IMR-90 (cell line): ENCODE measurements at regions of chr14 and their contacts with region 1.

Region 1: GRCh38 chr14:58059126-58059525 is 92.9 kb downstream of the ARMH4 start:
- DNase-seq: no peak
- ATAC-seq: no peak
- H3K4me3 ChIP-seq: no peak overlapping the region
- H3K27ac ChIP-seq: no peak overlapping the region
- H3K4me1 ChIP-seq: no peaks in the 10 kb centered on the region
- H3K27me3 ChIP-seq: peaks cover 3% of the 10 kb centered on the region
- CTCF ChIP-seq: no peak
- POLR2A ChIP-seq: no peak
- RAD21 ChIP-seq: no peak

Region 2: DNA sequence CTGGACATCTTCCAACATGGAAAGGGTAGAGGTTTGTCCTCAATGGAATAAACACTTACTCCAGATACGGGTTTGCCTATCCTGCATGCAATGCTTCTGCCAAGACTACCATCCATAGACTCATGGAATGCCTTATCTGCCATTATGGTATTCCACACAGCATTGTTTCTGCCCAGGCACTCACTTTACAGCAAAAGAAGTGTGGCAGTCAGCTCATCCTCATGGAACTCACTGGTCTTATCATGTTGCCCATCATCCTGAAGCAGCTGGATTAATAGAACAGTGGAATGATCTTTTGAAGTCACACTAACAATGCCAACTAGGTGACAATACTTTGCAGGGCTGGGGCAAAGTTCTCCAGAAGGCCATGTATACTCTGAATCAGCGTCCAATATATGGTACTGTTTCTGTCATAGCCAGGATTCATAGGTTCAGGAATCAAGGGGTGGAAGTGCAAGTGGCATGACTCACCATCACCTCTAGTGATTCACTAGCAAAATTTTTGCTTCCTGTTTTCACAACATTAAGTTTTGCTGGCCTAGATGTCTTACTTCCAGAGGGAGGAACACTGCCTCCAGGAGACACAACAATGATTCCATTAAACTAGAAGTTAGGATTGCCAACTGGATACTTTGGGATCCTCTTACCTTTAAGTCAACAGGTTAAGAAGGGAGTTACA is 333.6 kb before region 1 on chr14:
- CTCF ChIA-PET with region 1: no interaction called
- POLR2A ChIA-PET with region 1: no interaction called
- dilution Hi-C with region 1: no loop called
- in situ Hi-C with region 1: no loop called
- intact Hi-C with region 1: loop called (anchors 10 kb)
- DNase-seq: no peak
- ATAC-seq: no peak
- H3K4me3 ChIP-seq: no peak overlapping the region
- H3K27ac ChIP-seq: no peak overlapping the region
- H3K4me1 ChIP-seq: no peaks in the 10 kb centered on the region
- H3K27me3 ChIP-seq: no peaks in the 10 kb centered on the region
- CTCF ChIP-seq: no peak
- POLR2A ChIP-seq: no peak
- RAD21 ChIP-seq: no peak

Region 3: DNA sequence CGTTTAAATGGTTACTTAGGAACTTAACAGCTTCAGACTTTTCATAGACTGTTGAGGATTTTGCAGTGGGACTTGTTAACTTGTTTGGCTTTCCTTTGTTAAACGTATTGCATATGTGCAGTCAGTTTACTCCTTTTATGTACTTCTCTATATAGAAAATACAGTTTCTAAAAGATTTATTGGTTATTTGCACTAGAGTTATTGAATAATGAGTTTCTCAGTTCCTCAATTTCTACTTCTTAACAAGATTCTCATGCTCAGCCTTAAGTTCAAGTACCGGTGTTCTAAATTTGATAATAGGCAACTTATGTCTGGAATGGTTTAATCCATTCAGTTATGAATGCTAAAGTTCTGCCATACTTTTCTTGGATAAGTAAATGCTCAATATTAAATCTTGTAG is 186.4 kb after region 1 on chr14:
- CTCF ChIA-PET with region 1: no interaction called
- POLR2A ChIA-PET with region 1: no interaction called
- dilution Hi-C with region 1: no loop called
- in situ Hi-C with region 1: no loop called
- intact Hi-C with region 1: no loop called
- DNase-seq: no peak
- ATAC-seq: no peak
- H3K4me3 ChIP-seq: peak overlapping the region; percentile 80
- H3K27ac ChIP-seq: peak overlapping the region; percentile 93; the same call in 1 of the 2 replicates
- H3K4me1 ChIP-seq: no peaks in the 10 kb centered on the region
- H3K27me3 ChIP-seq: no peaks in the 10 kb centered on the region
- CTCF ChIP-seq: no peak
- POLR2A ChIP-seq: no peak
- RAD21 ChIP-seq: no peak